ENCODE measurements at regions of chr15 and their contacts with region 1.

Region 1: GRCh38 chr15:99275525-99276128 is 24.3 kb downstream of the LRRC28 start:
- DNase-seq: no peak
- H3K4me3 Mint-ChIP-seq: no peak overlapping the region
- H3K27ac Mint-ChIP-seq: no peak overlapping the region
- H3K4me1 Mint-ChIP-seq: peaks cover 24% of the 10 kb centered on the region
- H3K27me3 Mint-ChIP-seq: no peaks in the 10 kb centered on the region

Region 2: GRCh38 chr15:98881526-98882520 is 393.8 kb before region 1 on chr15:
- CTCF ChIA-PET with region 1: no interaction called
- DNase-seq: peak; percentile 27
- H3K4me3 Mint-ChIP-seq: no peak overlapping the region
- H3K27ac Mint-ChIP-seq: no peak overlapping the region
- H3K4me1 Mint-ChIP-seq: peaks cover 7% of the 10 kb centered on the region
- H3K27me3 Mint-ChIP-seq: no peaks in the 10 kb centered on the region

Region 3: GRCh38 chr15:99253381-99254090 is 22.1 kb before region 1 on chr15:
- CTCF ChIA-PET with region 1: interaction called, 13 read pairs
- DNase-seq: no peak
- H3K4me3 Mint-ChIP-seq: no peak overlapping the region
- H3K27ac Mint-ChIP-seq: peak overlapping the region; percentile 2
- H3K4me1 Mint-ChIP-seq: peaks cover 31% of the 10 kb centered on the region
- H3K27me3 Mint-ChIP-seq: no peaks in the 10 kb centered on the region

Region 4: DNA sequence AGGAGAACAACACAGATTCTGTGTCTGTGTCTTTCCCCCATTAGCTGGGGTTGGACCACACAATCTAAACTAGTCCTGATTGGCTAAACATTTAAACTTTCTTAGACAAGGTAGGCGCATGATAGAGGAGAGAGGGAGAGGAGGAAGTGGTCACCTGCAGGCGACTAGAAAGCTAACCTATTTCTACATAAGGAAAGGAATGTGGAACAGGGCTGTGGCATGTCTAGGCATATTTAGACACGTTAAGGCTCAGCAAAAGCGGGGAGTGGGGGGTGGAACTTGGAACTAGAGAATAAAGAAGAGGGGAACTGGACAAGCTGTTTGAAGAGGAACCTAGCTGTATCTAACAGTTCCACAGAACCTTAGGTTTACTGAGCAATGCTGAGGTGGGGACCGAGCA is 11.5 kb before region 1 on chr15:
- CTCF ChIA-PET with region 1: interaction called, 26 read pairs
- DNase-seq: no peak
- H3K4me3 Mint-ChIP-seq: no peak overlapping the region
- H3K27ac Mint-ChIP-seq: peak overlapping the region; percentile 33
- H3K4me1 Mint-ChIP-seq: peaks cover 17% of the 10 kb centered on the region
- H3K27me3 Mint-ChIP-seq: no peaks in the 10 kb centered on the region

Region 5: DNA sequence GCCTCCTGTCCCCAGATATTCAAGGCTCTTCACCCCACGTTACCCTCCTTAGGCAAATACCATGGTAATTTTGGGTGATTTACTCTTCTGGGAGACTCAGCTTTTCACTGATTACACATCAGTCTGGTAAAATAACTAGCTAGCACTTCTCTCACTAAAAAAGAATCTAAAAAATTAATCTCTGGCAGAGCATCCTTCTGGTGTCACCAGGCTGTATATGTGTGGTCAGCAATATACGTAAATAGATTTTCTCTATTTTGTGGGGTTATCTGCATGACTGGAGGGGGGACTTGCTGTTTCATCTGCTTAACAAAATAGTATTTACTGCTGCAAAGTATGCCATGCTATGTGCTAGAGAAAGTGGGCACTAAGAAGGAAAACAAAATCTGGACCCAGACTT is 20.8 kb after region 1 on chr15:
- CTCF ChIA-PET with region 1: no interaction called
- DNase-seq: no peak
- H3K4me3 Mint-ChIP-seq: no peak overlapping the region
- H3K27ac Mint-ChIP-seq: no peak overlapping the region
- H3K4me1 Mint-ChIP-seq: peaks cover 3% of the 10 kb centered on the region
- H3K27me3 Mint-ChIP-seq: no peaks in the 10 kb centered on the region

Region 6: GRCh38 chr15:99371180-99372103 is 95.8 kb after region 1 on chr15:
- CTCF ChIA-PET with region 1: interaction called, 11 read pairs
- DNase-seq: no peak
- H3K4me3 Mint-ChIP-seq: no peak overlapping the region
- H3K27ac Mint-ChIP-seq: peak overlapping the region; percentile 34
- H3K4me1 Mint-ChIP-seq: peaks cover 14% of the 10 kb centered on the region
- H3K27me3 Mint-ChIP-seq: no peaks in the 10 kb centered on the region

Region 7: DNA sequence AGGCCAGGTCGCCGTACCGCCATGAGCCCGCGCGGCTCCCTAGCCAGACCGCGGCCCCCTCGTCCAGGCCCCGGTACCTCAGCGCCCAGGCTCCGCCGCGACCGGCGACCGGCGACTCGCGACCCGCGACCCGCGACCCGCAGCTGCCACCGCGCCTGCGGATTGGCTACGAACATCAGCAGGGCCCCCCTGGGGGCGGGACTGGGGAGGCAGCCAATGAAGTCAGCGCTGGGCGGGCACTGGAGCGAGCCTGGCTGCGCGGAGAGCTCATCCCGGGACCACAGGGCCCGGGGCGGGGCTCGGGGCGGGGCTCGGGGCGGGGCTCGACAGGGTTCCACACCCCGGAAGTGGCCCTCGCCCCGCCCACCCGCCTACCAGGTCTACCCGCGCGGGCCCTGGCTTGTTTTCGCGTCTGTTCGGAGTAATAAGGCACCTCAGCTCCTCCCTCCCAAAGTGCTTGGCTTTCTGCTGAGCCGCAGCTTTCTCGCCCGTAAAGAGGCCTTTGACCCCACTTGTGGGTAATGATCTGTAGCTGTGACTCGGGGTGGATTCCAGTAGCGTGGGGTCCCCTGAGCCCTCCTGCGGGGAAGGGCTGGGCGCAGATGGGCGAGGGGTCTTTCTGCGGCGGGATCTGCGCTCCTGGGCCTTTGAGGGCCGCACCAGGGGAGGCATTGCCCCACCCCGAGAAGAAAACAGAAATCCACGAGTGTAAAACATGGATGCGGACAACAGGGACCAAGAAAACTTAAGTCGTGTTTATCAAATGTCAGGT is 457.8 kb after region 1 on chr15 and contains the start of gene LYSMD4:
- CTCF ChIA-PET with region 1: interaction called, 10 read pairs
- DNase-seq: peak; percentile 99
- H3K4me3 Mint-ChIP-seq: peak within 1 kb of the TSS; percentile 83
- H3K27ac Mint-ChIP-seq: peak within 1 kb of the TSS; percentile 96
- H3K4me1 Mint-ChIP-seq: peaks cover 42% of the 10 kb centered on the region
- H3K27me3 Mint-ChIP-seq: no peaks in the 10 kb centered on the region

Region 8: GRCh38 chr15:99755692-99756409 is 480.2 kb after region 1 on chr15:
- CTCF ChIA-PET with region 1: interaction called, 58 read pairs
- DNase-seq: peak; percentile 46
- H3K4me3 Mint-ChIP-seq: no peak overlapping the region
- H3K27ac Mint-ChIP-seq: no peak overlapping the region
- H3K4me1 Mint-ChIP-seq: peaks cover 5% of the 10 kb centered on the region
- H3K27me3 Mint-ChIP-seq: peaks cover 18% of the 10 kb centered on the region

Region 9: GRCh38 chr15:100341662-100342560 is 1066.3 kb after region 1 on chr15 and contains the start of gene ADAMTS17:
- CTCF ChIA-PET with region 1: interaction called, 10 read pairs
- DNase-seq: peak; percentile 97
- H3K4me3 Mint-ChIP-seq: peak within 1 kb of the TSS; percentile 72
- H3K27ac Mint-ChIP-seq: peak within 1 kb of the TSS; percentile 61
- H3K4me1 Mint-ChIP-seq: peaks cover 39% of the 10 kb centered on the region
- H3K27me3 Mint-ChIP-seq: peaks cover 38% of the 10 kb centered on the region

Measured in activated naive CD4-positive, alpha-beta T cell treated with anti-CD3 and anti-CD28 coated beads, Interleukin-2, amount 10 ng/mL, durations not matched to agents 7 days and 5 days (primary cell).